PC-9 (cell line): ENCODE measurements at regions of chr2 and their contacts with region 1.

Region 1: DNA sequence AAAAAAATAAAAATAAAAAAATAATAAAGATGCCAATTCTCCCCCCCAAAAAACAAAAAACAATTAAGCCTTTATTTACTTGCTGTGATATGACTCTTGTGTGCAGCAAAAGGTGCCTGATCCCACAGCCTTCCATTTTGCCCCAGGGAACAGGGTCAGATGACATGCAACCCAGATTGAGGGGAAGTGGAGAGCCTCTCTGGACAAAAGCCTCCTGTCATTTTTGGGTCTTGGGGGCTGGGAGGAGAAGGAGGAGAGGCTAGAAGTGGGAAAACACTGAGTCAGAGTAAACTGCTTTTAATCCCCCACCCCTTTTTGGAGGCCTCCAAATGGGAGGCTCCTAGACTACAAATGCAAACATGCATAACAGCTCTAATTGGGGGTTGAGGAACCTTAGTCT is 46.6 kb upstream of the SCG2 start:
- DNase-seq: no peak
- H3K4me3 ChIP-seq: no peak overlapping the region
- H3K27ac ChIP-seq: no peak overlapping the region
- H3K4me1 ChIP-seq: no peaks in the 10 kb centered on the region
- H3K27me3 ChIP-seq: no peaks in the 10 kb centered on the region
- CTCF ChIP-seq: no peak

Region 2: DNA sequence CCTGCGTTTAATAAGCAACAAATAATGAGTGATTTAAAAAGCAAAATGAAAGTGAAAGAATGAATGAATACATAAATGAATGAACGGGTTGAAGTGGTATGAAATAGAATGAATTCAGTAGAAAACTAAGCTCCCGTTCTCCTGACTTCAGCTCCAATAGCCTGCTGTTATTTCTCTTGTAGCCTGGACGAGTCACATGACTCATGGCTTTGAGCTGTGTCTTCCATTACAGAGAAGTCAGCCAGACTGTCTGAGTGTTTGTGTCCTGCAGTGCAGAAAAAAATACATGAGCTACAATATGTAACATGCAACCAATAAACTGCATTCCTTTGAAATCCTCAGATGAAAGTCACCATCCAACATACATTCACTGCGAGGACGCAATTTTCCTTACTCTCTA is 67.8 kb before region 1 on chr2:
- CTCF ChIA-PET with region 1: no interaction called
- POLR2A ChIA-PET with region 1: no interaction called
- intact Hi-C with region 1: no loop called
- DNase-seq: no peak
- H3K4me3 ChIP-seq: no peak overlapping the region
- H3K27ac ChIP-seq: no peak overlapping the region
- H3K4me1 ChIP-seq: peaks cover 15% of the 10 kb centered on the region
- H3K27me3 ChIP-seq: no peaks in the 10 kb centered on the region
- CTCF ChIP-seq: no peak

Region 3: DNA sequence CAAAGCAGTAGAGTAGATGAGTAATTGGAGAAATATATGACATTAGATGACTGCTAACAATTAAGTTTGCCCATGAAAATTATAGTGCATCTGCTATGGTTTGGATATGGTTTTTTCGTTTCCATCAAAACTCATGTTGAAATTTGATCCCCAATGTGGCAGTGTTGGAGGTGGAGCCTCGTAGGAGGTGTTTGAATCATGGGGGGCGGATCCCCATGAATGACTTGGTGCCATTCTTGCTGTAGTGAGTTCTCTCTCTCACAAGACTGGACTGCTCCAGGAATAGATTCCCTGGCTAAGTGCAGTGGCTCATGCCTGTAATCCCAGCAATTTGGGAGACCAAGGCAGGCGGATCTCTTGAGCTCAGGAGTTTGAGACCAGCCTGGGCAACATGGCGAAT is 946.1 kb after region 1 on chr2:
- CTCF ChIA-PET with region 1: no interaction called
- POLR2A ChIA-PET with region 1: interaction called, 10 read pairs
- intact Hi-C with region 1: no loop called
- DNase-seq: peak in 1 of 2 experiments; percentile 20
- H3K4me3 ChIP-seq: no peak overlapping the region
- H3K27ac ChIP-seq: no peak overlapping the region
- H3K4me1 ChIP-seq: peaks cover 26% of the 10 kb centered on the region
- H3K27me3 ChIP-seq: no peaks in the 10 kb centered on the region
- CTCF ChIP-seq: no peak